CD4-positive, alpha-beta memory T cell (primary cell): ENCODE measurements at regions of chr21 and their contacts with region 1.

Region 1: GRCh38 chr21:33360881-33361602 is 36.3 kb downstream of the IFNAR1 start:
- DNase-seq: peak; percentile 82 to 87 (median 83)
- H3K4me3 ChIP-seq: peak overlapping the region; percentile 47 to 58
- H3K4me3 Mint-ChIP-seq: peak overlapping the region; percentile 83 to 97 (median 91)
- H3K27ac ChIP-seq: peak overlapping the region; percentile 47
- H3K27ac Mint-ChIP-seq: peak overlapping the region; percentile 87 to 99 (median 94)
- H3K4me1 ChIP-seq: peaks cover 21% of the 10 kb centered on the region
- H3K4me1 Mint-ChIP-seq: peaks cover 13 to 22% (median 18%) of the 10 kb centered on the region in 4 donors
- H3K27me3 ChIP-seq: no peaks in the 10 kb centered on the region
- H3K27me3 Mint-ChIP-seq: peaks cover 0 to under 1% of the 10 kb centered on the region in 2 donors

Region 2: DNA sequence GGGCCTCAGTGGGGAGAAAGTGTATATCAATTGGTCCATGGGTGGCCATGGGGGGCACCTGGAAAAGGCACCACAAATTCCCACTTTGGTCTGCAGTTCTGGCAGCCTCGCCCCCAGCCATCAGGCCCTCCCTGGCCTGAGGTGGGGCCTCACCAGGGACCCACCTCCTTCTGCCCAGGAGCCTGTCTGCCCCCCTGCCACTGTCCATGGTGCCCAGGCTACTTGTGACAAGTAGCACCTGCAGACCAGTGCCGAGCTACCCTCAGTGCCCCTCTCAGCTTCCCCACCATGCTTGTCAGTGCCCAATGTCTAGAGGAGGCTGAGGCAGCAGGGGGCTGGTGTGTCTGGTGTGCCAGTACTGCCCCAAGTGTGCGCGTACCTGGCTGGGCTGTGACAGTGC is 502.4 kb before region 1 on chr21:
- CTCF ChIA-PET with region 1: no interaction called
- POLR2A ChIA-PET with region 1: no interaction called
- intact Hi-C with region 1: no loop called
- DNase-seq: no peak
- H3K4me3 ChIP-seq: no peak overlapping the region
- H3K4me3 Mint-ChIP-seq: peak overlapping the region in 1 of 8 donors; percentile 9
- H3K27ac ChIP-seq: no peak overlapping the region
- H3K27ac Mint-ChIP-seq: no peak overlapping the region
- H3K4me1 ChIP-seq: no peaks in the 10 kb centered on the region
- H3K4me1 Mint-ChIP-seq: no peaks in the 10 kb centered on the region
- H3K27me3 ChIP-seq: no peaks in the 10 kb centered on the region
- H3K27me3 Mint-ChIP-seq: peaks cover 4 to 18% of the 10 kb centered on the region in 2 donors

Region 3: DNA sequence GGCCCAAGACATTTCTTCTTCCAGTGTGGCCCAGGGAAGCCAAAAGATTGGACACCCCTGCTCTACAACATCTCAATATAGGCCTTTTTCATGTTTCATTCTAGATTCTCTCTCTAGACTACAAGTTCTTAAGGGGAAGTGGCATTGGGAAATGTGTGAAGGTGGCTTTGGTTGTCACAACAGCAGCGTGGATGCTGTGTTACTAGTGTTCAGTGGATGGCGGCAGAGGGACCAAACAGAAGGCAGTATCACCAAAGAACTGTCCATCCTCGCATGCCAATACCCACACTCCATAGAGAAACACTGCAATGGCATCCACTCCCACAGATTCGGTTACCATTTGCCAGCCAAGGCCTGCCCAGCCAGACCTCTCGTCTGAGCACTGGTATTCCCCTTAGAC is 155.6 kb before region 1 on chr21:
- CTCF ChIA-PET with region 1: interaction called, 25 read pairs
- POLR2A ChIA-PET with region 1: interaction called, 25 read pairs
- intact Hi-C with region 1: loop called (anchors 1 kb)
- DNase-seq: peak in 3 of 5 donors; percentile 20 to 35 (median 23)
- H3K4me3 ChIP-seq: no peak overlapping the region
- H3K4me3 Mint-ChIP-seq: peak overlapping the region; percentile 58 to 92 (median 73)
- H3K27ac ChIP-seq: no peak overlapping the region
- H3K27ac Mint-ChIP-seq: peak overlapping the region; percentile 71 to 97 (median 86)
- H3K4me1 ChIP-seq: peaks cover 38% of the 10 kb centered on the region
- H3K4me1 Mint-ChIP-seq: peaks cover 34 to 67% (median 47%) of the 10 kb centered on the region in 4 donors
- H3K27me3 ChIP-seq: no peaks in the 10 kb centered on the region
- H3K27me3 Mint-ChIP-seq: no peaks in the 10 kb centered on the region

Region 4: GRCh38 chr21:33256019-33256418 is 105.0 kb before region 1 on chr21:
- CTCF ChIA-PET with region 1: interaction called, 16 read pairs
- POLR2A ChIA-PET with region 1: interaction called, 13 read pairs
- intact Hi-C with region 1: no loop called
- DNase-seq: no peak
- H3K4me3 ChIP-seq: no peak overlapping the region
- H3K4me3 Mint-ChIP-seq: no peak overlapping the region
- H3K27ac ChIP-seq: no peak overlapping the region
- H3K27ac Mint-ChIP-seq: peak overlapping the region; percentile 1 to 84 (median 80)
- H3K4me1 ChIP-seq: peaks cover 37% of the 10 kb centered on the region
- H3K4me1 Mint-ChIP-seq: peaks cover 32 to 79% (median 53%) of the 10 kb centered on the region in 4 donors
- H3K27me3 ChIP-seq: no peaks in the 10 kb centered on the region
- H3K27me3 Mint-ChIP-seq: no peaks in the 10 kb centered on the region

Region 5: DNA sequence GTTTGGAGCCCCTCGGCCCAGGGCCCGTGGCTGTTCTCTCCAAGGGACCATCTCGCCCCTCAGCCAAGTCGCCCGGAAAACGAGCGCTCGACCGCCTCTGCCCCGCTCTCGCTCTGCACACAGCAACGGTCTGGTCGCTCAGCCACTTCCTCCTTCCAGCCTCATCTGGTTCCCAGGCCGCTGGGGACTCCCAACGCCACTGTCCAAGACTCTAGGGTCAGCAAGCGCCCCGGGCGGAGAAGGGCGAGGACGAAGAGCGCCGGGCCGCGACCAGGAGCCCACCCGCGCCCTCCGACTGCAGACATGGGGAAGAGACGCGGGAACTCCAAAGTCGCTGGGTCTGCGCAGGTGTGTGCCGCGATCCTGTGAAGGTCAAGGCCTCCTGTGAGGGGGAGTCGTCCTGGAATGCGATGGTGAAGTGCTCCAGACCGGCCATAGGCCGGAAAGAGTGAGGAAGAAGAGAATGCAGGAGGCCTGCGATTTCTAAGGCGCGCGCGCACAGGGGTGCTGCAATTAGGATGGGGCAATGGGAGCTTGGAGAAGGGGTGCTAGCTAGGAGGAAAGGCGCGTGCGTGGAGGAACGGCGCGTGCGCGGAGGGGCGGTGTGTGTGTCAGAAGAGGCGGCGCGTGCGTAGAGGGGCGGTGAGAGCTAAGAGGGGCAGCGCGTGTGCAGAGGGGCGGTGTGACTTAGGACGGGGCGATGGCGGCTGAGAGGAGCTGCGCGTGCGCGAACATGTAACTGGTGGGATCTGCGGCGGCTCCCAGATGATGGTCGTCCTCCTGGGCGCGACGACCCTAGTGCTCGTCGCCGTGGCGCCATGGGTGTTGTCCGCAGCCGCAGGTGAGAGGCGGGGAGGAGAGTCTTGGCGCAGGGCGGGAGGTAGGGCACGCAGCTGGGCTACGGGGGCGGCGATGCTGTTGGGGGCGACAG is 36.5 kb before region 1 on chr21 and contains the start of gene IFNAR1:
- CTCF ChIA-PET with region 1: interaction called, 56 read pairs
- POLR2A ChIA-PET with region 1: interaction called, 114 read pairs
- intact Hi-C with region 1: loop called (anchors 1 kb)
- DNase-seq: peak; percentile 94 to 99 (median 98)
- H3K4me3 ChIP-seq: peak within 1 kb of the TSS; percentile 90 to 99
- H3K4me3 Mint-ChIP-seq: no peak within 1 kb of the TSS
- H3K27ac ChIP-seq: peak within 1 kb of the TSS; percentile 95
- H3K27ac Mint-ChIP-seq: no peak within 1 kb of the TSS
- H3K4me1 ChIP-seq: peaks cover 39% of the 10 kb centered on the region
- H3K4me1 Mint-ChIP-seq: peaks cover 18 to 32% (median 26%) of the 10 kb centered on the region in 4 donors
- H3K27me3 ChIP-seq: no peaks in the 10 kb centered on the region
- H3K27me3 Mint-ChIP-seq: no peaks in the 10 kb centered on the region
- total RNA-seq, gene IFNAR1: 60.1 to 62.5 TPM

Region 6: GRCh38 chr21:33374450-33375096 is 13.5 kb after region 1 on chr21:
- CTCF ChIA-PET with region 1: interaction called, 59 read pairs
- POLR2A ChIA-PET with region 1: interaction called, 62 read pairs
- intact Hi-C with region 1: loop called (anchors 2 kb)
- DNase-seq: peak in 4 of 5 donors; percentile 52 to 55 (median 54)
- H3K4me3 ChIP-seq: no peak overlapping the region
- H3K4me3 Mint-ChIP-seq: no peak overlapping the region
- H3K27ac ChIP-seq: no peak overlapping the region
- H3K27ac Mint-ChIP-seq: peak overlapping the region in 1 of 7 donors; percentile 51
- H3K4me1 ChIP-seq: peaks cover 13% of the 10 kb centered on the region
- H3K4me1 Mint-ChIP-seq: peaks cover 7 to 21% (median 10%) of the 10 kb centered on the region in 4 donors
- H3K27me3 ChIP-seq: no peaks in the 10 kb centered on the region
- H3K27me3 Mint-ChIP-seq: no peaks in the 10 kb centered on the region

Region 7: GRCh38 chr21:33403779-33404585 is 42.9 kb after region 1 on chr21:
- CTCF ChIA-PET with region 1: interaction called, 20 read pairs
- POLR2A ChIA-PET with region 1: interaction called, 39 read pairs
- intact Hi-C with region 1: loop called (anchors 1 kb)
- DNase-seq: peak in 2 of 5 donors; percentile 17 to 20
- H3K4me3 ChIP-seq: peak overlapping the region; percentile 54 to 78
- H3K4me3 Mint-ChIP-seq: peak overlapping the region; percentile 93 to 98 (median 96)
- H3K27ac ChIP-seq: peak overlapping the region; percentile 58
- H3K27ac Mint-ChIP-seq: peak overlapping the region; percentile 83 to 98 (median 91)
- H3K4me1 ChIP-seq: peaks cover 31% of the 10 kb centered on the region
- H3K4me1 Mint-ChIP-seq: peaks cover 21 to 43% (median 33%) of the 10 kb centered on the region in 4 donors
- H3K27me3 ChIP-seq: no peaks in the 10 kb centered on the region
- H3K27me3 Mint-ChIP-seq: peaks cover 0 to 2% of the 10 kb centered on the region in 2 donors

Region 8: DNA sequence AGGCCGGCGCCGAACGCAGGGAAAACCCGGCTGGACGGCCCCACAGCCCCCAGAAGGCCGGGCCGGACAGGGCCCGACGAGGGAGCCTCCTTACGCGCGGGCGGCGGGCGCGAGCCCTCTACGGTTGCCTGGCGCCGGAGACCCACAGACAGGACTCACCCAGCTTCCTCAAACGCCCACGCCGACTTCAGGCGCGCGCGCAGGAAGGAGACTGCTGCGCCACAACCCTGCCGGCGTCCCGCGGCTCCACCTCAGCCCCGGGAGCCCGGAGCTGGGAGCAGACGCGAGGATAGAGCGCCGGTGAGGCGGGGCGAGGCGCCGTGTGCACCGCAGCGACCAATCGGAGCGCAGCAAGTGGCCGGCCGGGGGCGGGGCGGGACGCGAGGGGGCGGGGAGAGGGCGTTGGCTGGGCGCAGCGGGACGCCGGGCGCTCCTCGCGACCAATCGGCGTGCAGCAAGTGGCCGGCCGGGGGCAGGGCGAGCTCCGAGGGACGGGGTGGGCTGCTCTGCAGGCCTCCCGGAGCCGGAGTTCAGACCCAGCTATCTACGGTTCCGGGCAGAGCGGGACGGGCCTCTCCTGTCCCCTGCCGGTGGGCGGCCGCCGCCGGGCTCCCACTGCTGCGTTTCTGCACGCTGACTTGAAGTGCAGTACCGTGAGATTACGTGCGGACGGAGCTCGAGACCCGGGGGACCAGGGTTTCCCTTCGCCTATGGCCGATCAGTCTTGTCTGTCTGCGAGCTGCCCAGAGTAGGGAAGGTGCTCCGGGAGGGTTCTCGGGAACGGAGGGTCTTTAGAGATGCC is 118.8 kb after region 1 on chr21 and contains the start of gene TMEM50B:
- CTCF ChIA-PET with region 1: interaction called, 11 read pairs
- POLR2A ChIA-PET with region 1: interaction called, 23 read pairs
- intact Hi-C with region 1: loop called (anchors 1 kb)
- DNase-seq: peak; percentile 91 to 95 (median 94)
- H3K4me3 ChIP-seq: peak within 1 kb of the TSS; percentile 71 to 95
- H3K4me3 Mint-ChIP-seq: peak within 1 kb of the TSS; percentile 92 to 96 (median 94)
- H3K27ac ChIP-seq: peak within 1 kb of the TSS; percentile 91
- H3K27ac Mint-ChIP-seq: peak within 1 kb of the TSS; percentile 87 to 97 (median 95)
- H3K4me1 ChIP-seq: peaks cover 14% of the 10 kb centered on the region
- H3K4me1 Mint-ChIP-seq: peaks cover 8 to 29% (median 19%) of the 10 kb centered on the region in 4 donors
- H3K27me3 ChIP-seq: no peaks in the 10 kb centered on the region
- H3K27me3 Mint-ChIP-seq: no peaks in the 10 kb centered on the region
- total RNA-seq, gene TMEM50B: 110 to 112 TPM

Region 9: DNA sequence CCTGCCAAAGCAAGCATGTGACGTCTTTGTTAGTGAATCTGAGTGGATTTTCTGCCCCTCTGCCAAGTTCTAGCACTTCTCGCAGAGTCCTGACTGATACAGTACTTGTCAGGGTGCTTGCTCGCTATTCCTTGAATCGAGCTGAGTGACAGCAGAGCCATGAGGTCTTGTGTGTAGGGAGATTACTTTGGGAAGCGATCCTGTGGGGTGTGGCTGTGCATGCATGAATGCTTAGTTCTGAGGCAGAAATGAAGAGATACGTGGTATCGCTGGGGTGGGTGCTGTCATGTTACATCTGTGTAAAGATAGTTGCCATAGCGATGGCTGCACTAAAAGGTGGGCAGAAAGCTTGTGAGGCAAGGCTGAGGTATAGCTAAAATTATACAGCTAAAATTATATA is 149.8 kb after region 1 on chr21:
- CTCF ChIA-PET with region 1: no interaction called
- POLR2A ChIA-PET with region 1: no interaction called
- intact Hi-C with region 1: no loop called
- DNase-seq: no peak
- H3K4me3 ChIP-seq: no peak overlapping the region
- H3K4me3 Mint-ChIP-seq: no peak overlapping the region
- H3K27ac ChIP-seq: no peak overlapping the region
- H3K27ac Mint-ChIP-seq: no peak overlapping the region
- H3K4me1 ChIP-seq: no peaks in the 10 kb centered on the region
- H3K4me1 Mint-ChIP-seq: peaks cover 0 to 4% (median 0%) of the 10 kb centered on the region in 4 donors
- H3K27me3 ChIP-seq: no peaks in the 10 kb centered on the region
- H3K27me3 Mint-ChIP-seq: no peaks in the 10 kb centered on the region